Activated T-helper 2 cell treated with anti-CD3 and anti-CD28 coated beads, Interferon-gamma antibody, Interleukin-2, Interleukin-4, amounts not matched to agents 10 μg/mL and 5 μg/mL and 100 μg/mL, durations not matched to agents 14 hours and 24 hours and 36 hours (primary cell): ENCODE measurements at regions of chr1 and their contacts with region 1.

Region 1: GRCh38 chr1:167474191-167474716 is 44.1 kb downstream of the CD247 start:
- DNase-seq: no peak
- H3K4me3 Mint-ChIP-seq: peak overlapping the region; percentile 43
- H3K27ac Mint-ChIP-seq: peak overlapping the region; percentile 79
- H3K4me1 Mint-ChIP-seq: peaks cover 64% of the 10 kb centered on the region
- H3K27me3 Mint-ChIP-seq: no peaks in the 10 kb centered on the region

Region 2: GRCh38 chr1:167454894-167455785 is 19.1 kb before region 1 on chr1:
- intact Hi-C with region 1: loop called (anchors 1 kb)
- DNase-seq: peak; percentile 77
- H3K4me3 Mint-ChIP-seq: peak overlapping the region; percentile 77
- H3K27ac Mint-ChIP-seq: peak overlapping the region; percentile 51
- H3K4me1 Mint-ChIP-seq: peaks cover 50% of the 10 kb centered on the region
- H3K27me3 Mint-ChIP-seq: no peaks in the 10 kb centered on the region

Region 3: DNA sequence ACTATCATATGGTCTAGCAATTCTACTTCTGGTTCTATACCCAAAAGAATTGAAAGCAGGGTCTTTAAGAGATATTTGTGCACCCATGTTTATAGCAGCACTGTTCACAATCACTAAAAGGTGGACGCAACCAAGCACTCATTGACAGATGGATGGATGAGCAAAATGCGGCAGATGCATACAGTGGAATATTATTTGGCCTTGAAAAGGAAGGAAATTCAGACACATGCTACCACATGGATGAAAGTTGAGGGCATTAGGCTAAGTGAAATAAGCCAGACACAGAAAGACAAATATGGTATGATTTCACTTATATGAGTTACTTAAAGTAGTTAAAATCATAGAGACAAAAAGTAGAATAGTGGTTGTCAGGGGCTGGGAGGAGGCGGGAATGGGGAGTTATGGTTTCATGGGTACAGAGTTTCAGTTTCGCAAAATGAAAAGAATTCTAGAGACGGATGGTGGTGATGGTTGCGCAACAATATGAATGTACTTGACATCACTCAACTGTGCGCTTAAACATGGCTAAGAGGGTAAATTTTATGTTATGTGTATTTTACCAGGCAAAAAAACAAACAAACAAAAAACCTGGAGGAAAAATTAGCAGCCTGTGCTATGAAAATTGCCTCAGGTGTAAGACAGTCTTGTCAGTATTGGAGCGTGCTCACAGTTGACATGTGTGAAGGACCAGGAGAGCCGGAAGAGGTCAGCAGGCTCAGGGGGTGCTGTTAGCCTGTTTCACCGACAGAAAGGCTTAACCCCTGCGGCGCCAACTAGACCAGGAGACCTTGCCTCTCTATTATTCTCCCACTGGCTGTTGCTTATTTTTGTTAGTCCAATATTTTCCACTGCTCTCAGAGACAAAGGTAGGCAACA is 17.6 kb after region 1 on chr1:
- intact Hi-C with region 1: loop called (anchors 2 kb)
- DNase-seq: no peak
- H3K4me3 Mint-ChIP-seq: peak overlapping the region; percentile 72
- H3K27ac Mint-ChIP-seq: peak overlapping the region; percentile 91
- H3K4me1 Mint-ChIP-seq: peaks cover 83% of the 10 kb centered on the region
- H3K27me3 Mint-ChIP-seq: no peaks in the 10 kb centered on the region

Region 4: DNA sequence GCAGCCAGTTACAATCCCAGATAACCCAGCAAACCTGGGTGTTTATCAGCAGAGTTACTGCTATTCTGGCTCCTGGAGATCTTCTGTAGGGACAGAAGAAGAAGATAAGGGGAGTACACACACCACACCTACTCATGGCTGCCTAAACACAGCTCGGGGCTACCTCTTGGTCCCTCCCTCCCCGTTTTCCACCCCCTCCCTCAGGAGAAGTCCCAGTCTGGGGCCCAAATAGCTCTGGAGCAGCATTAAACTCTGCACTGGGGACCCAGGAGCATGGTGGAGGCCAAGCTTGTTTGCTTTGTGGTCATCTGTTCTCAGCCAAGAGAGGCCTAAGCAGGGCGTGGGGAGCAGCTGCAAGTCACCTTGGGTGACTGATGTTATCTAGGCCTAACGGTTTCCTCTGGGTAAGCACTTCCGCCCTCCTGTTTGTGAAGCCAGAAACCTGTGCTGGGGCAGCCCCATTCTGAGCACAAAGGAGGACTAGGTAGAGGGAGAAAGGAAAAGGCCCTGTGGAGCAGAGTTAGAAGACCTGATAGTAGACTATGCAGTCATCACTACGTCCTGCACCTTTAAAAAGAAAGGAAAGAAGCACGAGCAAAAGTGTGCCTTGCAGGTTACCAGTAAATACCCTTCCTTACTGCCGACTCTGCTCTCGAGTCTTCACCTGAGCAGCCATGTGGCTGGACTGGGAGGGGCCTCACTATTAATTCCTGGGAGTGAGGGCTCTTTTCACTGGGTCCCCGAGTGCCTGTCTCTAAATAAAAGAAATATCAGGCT is 153.8 kb after region 1 on chr1:
- intact Hi-C with region 1: no loop called
- DNase-seq: peak; percentile 84
- H3K4me3 Mint-ChIP-seq: peak overlapping the region; percentile 96
- H3K27ac Mint-ChIP-seq: peak overlapping the region; percentile 95
- H3K4me1 Mint-ChIP-seq: peaks cover 55% of the 10 kb centered on the region
- H3K27me3 Mint-ChIP-seq: no peaks in the 10 kb centered on the region